ENCODE measurements at regions of chr7 and their contacts with region 1.

Region 1: DNA sequence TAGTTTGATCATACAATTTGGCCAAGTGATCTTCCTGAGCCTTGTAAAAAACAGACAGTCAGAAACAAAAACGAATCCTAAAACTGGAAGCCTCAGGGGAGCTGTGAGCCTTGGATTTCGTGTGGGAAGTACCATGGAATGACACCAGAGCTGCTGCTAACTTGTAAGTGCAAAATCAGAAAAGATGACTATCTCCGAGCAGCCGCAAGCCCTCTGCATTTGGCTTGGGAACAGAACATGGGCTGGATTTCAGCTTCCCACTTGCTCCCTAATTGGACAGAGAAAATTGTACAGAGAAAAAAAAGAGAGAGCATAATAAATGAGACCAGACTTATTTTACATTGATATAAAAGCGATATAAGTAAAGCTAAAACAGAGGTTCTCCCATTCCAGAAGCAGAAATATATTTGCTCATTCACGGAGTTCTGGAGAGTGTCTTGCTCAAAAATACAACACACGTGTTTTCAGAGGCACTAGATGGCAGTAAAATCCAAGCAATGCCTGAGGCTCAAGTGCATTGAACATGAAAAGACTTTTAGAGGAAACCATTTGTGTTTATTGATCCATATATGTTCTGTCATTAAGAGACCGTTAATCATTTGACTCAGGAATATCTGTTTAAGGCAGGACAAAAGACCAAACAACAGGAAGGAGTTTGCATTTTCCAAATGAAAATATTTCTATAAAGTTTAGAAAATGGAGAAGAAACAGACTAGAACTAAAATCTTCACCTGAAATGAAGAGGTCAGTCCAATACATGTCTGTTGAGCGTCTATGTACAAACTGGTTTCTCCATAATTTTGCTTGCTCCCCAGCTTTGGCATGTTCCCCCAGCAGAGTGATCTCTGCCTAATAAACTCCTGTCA is 78.3 kb upstream of the SLC26A5 start:
- DNase-seq: no peak
- ATAC-seq: peak; percentile 44 to 47

Region 2: GRCh38 chr7:104096683-104097082 is 572.4 kb after region 1 on chr7:
- intact Hi-C with region 1: no loop called
- DNase-seq: no peak
- ATAC-seq: no peak

Region 3: DNA sequence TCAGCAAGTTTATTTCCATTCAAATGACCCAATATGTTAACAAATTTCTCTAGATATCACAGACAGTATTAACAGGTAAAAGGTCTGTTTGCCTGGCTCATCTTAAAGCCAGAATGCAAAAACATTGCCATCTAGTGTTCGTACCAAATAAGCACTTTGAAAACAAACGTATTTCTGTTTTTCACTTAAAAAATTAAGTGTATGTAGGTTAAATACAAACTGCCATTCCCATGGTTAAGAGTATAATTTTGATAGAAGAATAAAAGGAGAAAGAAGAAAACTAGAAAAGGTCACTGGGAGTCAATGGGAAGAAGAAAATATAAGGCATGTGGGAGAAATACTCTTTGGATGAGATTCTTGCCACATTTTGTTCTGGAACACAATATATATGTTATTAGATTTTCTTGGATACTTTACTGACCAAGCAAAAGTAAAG is 632.6 kb after region 1 on chr7:
- intact Hi-C with region 1: loop called in 1 of 2 experiments (anchors 5 kb)
- DNase-seq: no peak
- ATAC-seq: no peak